Uterus (tissue), 4 donors: ENCODE measurements at regions of chr4 and their contacts with region 1.

Region 1: DNA sequence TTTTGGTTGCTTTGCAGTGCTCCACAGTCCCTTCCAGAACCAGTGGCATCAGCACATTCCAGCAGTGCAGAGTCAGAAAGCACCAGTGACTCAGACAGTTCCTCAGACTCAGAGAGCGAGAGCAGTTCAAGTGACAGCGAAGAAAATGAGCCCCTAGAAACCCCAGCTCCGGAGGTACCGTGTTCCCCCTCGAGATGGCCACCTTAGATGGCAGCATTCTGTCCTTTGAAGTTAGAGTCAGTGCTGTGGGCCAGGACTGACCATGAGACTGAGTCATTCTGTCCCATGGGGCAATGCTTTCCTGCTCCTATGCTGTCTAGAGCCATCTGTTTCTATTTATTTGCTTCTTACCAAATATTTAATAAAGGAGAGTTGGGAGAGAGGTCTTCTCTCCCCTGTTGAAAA is 112.3 kb downstream of the KLHL8 start:
- DNase-seq: peak; percentile 46 to 67
- H3K4me3 ChIP-seq: no peak overlapping the region
- H3K27ac ChIP-seq: peak overlapping the region; percentile 72 to 87
- H3K4me1 ChIP-seq: peaks cover 13 to 14% of the 10 kb centered on the region in 2 donors
- H3K27me3 ChIP-seq: no peaks in the 10 kb centered on the region
- CTCF ChIP-seq: no peak
- POLR2A ChIP-seq: no peak

Region 2: GRCh38 chr4:86720508-86721068 is 387.6 kb before region 1 on chr4:
- intact Hi-C with region 1: no loop called
- DNase-seq: no peak
- H3K4me3 ChIP-seq: no peak overlapping the region
- H3K27ac ChIP-seq: no peak overlapping the region
- H3K4me1 ChIP-seq: no peaks in the 10 kb centered on the region
- H3K27me3 ChIP-seq: no peaks in the 10 kb centered on the region
- CTCF ChIP-seq: no peak
- POLR2A ChIP-seq: no peak

Region 3: DNA sequence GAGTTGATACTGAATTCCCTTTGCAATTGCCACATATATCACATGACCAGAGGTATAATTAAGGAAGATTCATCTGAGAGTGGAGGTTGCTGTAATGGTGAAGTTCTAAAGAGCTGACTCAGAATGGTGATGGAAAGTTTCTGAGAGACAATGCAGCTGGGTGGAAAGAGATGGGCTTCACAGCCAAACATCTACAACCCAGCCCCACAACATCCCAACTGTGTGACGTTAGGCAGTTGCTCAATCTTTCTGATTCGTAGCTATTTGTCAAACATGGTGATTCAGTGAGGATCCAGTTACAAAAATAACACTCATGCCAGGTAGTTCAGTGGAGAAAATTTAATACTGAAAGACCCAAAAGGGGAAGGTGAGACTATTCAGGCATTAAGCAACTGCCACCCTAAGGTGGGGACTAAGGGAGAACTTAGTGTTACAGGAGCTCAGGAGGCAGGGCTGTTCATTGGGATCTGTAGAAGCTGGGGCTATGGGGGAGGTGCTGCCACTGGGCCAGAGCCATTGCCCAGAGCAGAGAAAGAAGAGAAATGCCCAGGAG is 180.2 kb before region 1 on chr4:
- intact Hi-C with region 1: loop called (anchors 10 kb)
- DNase-seq: peak; percentile 74 to 91
- H3K4me3 ChIP-seq: no peak overlapping the region
- H3K27ac ChIP-seq: peak overlapping the region; percentile 30 to 85
- H3K4me1 ChIP-seq: peaks cover 0 to 9% of the 10 kb centered on the region in 2 donors
- H3K27me3 ChIP-seq: no peaks in the 10 kb centered on the region
- CTCF ChIP-seq: no peak
- POLR2A ChIP-seq: no peak

Region 4: DNA sequence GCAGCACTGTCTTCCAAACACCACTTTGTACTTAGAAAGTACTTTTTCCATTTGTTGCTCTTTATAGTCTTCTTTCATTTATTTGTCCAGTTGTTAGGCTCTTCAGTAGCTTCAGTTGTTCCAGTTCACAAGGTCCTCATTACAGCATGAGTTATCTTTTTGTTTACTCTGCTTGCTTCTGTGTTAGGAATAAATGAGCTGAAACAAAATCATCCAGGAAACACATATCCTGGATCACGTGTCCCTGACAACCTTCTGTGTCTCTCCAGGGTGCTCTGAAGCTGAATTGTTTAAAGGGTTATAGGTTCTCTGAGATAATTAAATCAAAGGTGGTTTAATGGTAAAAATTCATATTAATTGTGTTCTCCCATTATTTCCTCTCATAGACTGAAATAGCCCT is 132.2 kb after region 1 on chr4:
- intact Hi-C with region 1: no loop called
- DNase-seq: no peak
- H3K4me3 ChIP-seq: no peak overlapping the region
- H3K27ac ChIP-seq: peak overlapping the region; percentile 61 to 87
- H3K4me1 ChIP-seq: peaks cover 0 to 8% of the 10 kb centered on the region in 2 donors
- H3K27me3 ChIP-seq: no peaks in the 10 kb centered on the region
- CTCF ChIP-seq: no peak
- POLR2A ChIP-seq: no peak